MCF 10A (cell line): ENCODE measurements at regions of chr10 and their contacts with region 1.

Region 1: GRCh38 chr10:89278034-89278535 is 23.8 kb upstream of the IFIT2 start:
- DNase-seq: peak; percentile 98
- H3K4me3 Mint-ChIP-seq: peak overlapping the region; percentile 62
- H3K27ac Mint-ChIP-seq: peak overlapping the region; percentile 100
- H3K4me1 Mint-ChIP-seq: peaks cover 53% of the 10 kb centered on the region
- H3K27me3 Mint-ChIP-seq: no peaks in the 10 kb centered on the region
- CTCF ChIP-seq: no peak

Region 2: DNA sequence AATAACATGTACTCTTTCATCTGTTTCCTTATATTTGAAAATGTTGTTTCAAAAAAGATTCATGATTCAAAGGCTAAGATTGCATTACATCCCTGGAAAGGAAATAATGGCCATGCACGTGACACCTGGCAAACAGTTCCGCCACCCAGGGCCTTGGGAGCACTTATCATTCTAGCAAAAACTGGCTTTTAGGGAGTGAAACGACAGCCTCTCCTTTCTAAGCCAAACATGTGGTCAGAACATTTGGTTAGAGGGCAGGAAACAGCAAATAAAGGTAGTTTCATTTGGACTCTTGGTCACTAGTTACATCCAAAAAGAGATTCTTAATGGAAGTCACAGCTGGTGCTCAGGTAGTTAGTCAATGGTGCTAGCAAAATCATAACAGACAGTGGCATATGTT is 204.0 kb before region 1 on chr10:
- CTCF ChIA-PET with region 1: no interaction called
- POLR2A ChIA-PET with region 1: no interaction called
- intact Hi-C with region 1: no loop called
- DNase-seq: no peak
- H3K4me3 Mint-ChIP-seq: no peak overlapping the region
- H3K27ac Mint-ChIP-seq: peak overlapping the region; percentile 61
- H3K4me1 Mint-ChIP-seq: peaks cover 12% of the 10 kb centered on the region
- H3K27me3 Mint-ChIP-seq: no peaks in the 10 kb centered on the region
- CTCF ChIP-seq: no peak

Region 3: GRCh38 chr10:89251409-89252224 is 26.5 kb before region 1 on chr10 and contains the start of gene LIPA:
- CTCF ChIA-PET with region 1: no interaction called
- POLR2A ChIA-PET with region 1: interaction called, 10 read pairs
- intact Hi-C with region 1: no loop called
- DNase-seq: peak; percentile 98
- H3K4me3 Mint-ChIP-seq: peak within 1 kb of the TSS; percentile 92
- H3K27ac Mint-ChIP-seq: peak within 1 kb of the TSS; percentile 52
- H3K4me1 Mint-ChIP-seq: peaks cover 16% of the 10 kb centered on the region
- H3K27me3 Mint-ChIP-seq: no peaks in the 10 kb centered on the region
- CTCF ChIP-seq: no peak
- total RNA-seq, gene LIPA: 18.5 and 22.3 TPM in 2 replicates

Region 4: DNA sequence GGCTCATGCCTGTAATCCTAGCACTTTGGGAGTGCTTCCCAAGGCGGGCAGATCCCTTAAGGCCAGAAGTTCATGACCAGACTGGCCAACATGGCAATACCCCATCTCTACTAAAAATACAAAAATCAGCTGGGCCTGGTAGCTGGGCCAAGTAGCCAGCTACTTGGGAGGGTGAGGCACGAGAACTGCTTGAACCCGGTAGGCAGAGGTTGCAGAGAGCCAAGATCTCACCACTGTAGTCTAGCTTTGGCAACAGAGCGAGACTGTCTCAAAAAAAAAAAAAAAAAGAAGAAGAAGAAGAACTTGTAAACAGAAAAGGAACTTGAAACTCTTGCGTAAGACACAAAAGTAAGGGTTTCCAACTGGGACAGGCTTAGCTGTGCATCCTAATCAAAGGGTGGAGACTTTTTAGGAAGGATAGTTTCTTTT is 18.1 kb after region 1 on chr10:
- CTCF ChIA-PET with region 1: interaction called, 6 read pairs
- POLR2A ChIA-PET with region 1: interaction called, 66 read pairs
- intact Hi-C with region 1: no loop called
- DNase-seq: peak; percentile 77
- H3K4me3 Mint-ChIP-seq: no peak overlapping the region
- H3K27ac Mint-ChIP-seq: peak overlapping the region; percentile 82
- H3K4me1 Mint-ChIP-seq: peaks cover 20% of the 10 kb centered on the region
- H3K27me3 Mint-ChIP-seq: no peaks in the 10 kb centered on the region
- CTCF ChIP-seq: no peak

Region 5: GRCh38 chr10:89342206-89342958 is 64.3 kb after region 1 on chr10:
- CTCF ChIA-PET with region 1: no interaction called
- POLR2A ChIA-PET with region 1: interaction called, 11 read pairs
- intact Hi-C with region 1: no loop called
- DNase-seq: peak; percentile 81
- H3K4me3 Mint-ChIP-seq: no peak overlapping the region
- H3K27ac Mint-ChIP-seq: no peak overlapping the region
- H3K4me1 Mint-ChIP-seq: peaks cover 36% of the 10 kb centered on the region
- H3K27me3 Mint-ChIP-seq: no peaks in the 10 kb centered on the region
- CTCF ChIP-seq: no peak

Region 6: GRCh38 chr10:89351780-89352597 is 73.9 kb after region 1 on chr10:
- CTCF ChIA-PET with region 1: no interaction called
- POLR2A ChIA-PET with region 1: interaction called, 12 read pairs
- intact Hi-C with region 1: no loop called
- DNase-seq: peak; percentile 82
- H3K4me3 Mint-ChIP-seq: peak overlapping the region; percentile 66
- H3K27ac Mint-ChIP-seq: peak overlapping the region; percentile 98
- H3K4me1 Mint-ChIP-seq: peaks cover 30% of the 10 kb centered on the region
- H3K27me3 Mint-ChIP-seq: no peaks in the 10 kb centered on the region
- CTCF ChIP-seq: no peak